CD8-positive, alpha-beta T cell (primary cell): ENCODE measurements at regions of chr5 and their contacts with region 1.

Region 1: DNA sequence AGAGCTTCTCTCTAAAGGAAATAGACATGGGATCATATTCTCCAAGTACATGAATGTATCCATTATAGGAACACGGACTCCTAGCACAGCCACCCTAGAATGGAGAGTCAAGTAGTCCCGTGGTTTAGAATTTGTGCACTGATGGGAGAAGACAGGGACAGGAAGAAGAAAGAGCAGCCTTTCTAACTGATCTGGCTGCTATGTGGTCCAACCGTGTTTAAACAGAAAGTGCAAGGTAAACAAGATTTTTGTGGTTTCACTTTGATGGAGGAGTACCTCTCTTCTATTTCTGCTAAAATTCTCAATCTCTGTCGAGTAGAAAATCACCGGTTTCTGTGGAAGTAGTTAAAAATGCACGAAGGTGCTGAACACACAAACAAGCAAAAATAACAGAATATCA is 171.3 kb downstream of the ST8SIA4 start:
- DNase-seq: peak in 5 of 9 experiments; percentile 2 to 69 (median 18)
- ATAC-seq: peak; percentile 92
- H3K4me3 ChIP-seq: peak overlapping the region; percentile 8 to 34
- H3K4me3 Mint-ChIP-seq: peak overlapping the region; percentile 75
- H3K27ac ChIP-seq: peak overlapping the region in 1 of 2 experiments; percentile 43
- H3K27ac Mint-ChIP-seq: peak overlapping the region; percentile 55
- H3K4me1 ChIP-seq: no peaks in the 10 kb centered on the region
- H3K4me1 Mint-ChIP-seq: peaks cover 12% of the 10 kb centered on the region
- H3K27me3 ChIP-seq: no peaks in the 10 kb centered on the region
- H3K27me3 Mint-ChIP-seq: no peaks in the 10 kb centered on the region
- CTCF ChIP-seq: no peak

Region 2: DNA sequence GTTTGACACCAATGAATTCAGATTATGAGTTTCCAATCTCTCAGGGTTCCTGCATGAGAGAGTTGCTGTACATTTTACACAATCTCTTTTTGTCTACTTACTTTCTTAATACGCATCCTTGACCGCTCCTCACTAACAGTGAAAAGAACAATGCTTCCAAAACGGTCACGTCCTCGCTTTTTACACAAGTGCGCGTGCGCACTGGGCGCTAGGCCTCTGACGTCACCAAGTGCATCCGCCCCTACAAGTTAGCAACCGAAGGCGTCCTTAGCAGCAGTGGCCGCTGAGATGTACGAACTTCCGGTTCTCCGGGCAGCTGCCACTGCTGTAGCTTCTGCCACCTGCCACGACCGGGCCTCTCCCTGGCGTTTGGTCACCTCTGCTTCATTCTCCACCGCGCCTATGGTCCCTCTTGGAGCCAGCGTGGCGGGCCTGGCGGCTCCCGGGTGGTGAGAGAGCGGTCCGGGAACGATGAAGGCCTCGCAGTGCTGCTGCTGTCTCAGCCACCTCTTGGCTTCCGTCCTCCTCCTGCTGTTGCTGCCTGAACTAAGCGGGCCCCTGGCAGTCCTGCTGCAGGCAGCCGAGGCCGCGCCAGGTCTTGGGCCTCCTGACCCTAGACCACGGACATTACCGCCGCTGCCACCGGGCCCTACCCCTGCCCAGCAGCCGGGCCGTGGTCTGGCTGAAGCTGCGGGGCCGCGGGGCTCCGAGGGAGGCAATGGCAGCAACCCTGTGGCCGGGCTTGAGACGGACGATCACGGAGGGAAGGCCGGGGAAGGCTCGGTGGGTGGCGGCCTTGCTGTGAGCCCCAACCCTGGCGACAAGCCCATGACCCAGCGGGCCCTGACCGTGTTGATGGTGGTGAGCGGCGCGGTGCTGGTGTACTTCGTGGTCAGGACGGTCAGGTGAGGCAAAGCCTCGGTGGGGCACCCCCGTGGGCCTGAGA is 196.4 kb before region 1 on chr5 and contains the start of gene FAM174A:
- CTCF ChIA-PET with region 1: no interaction called
- POLR2A ChIA-PET with region 1: no interaction called
- intact Hi-C with region 1: loop called in 1 of 2 experiments (anchors 5 kb)
- DNase-seq: peak; percentile 88 to 98 (median 94)
- ATAC-seq: peak; percentile 86
- H3K4me3 ChIP-seq: peak within 1 kb of the TSS; percentile 92 to 93
- H3K4me3 Mint-ChIP-seq: peak within 1 kb of the TSS; percentile 88
- H3K27ac ChIP-seq: peak within 1 kb of the TSS; percentile 90 to 93
- H3K27ac Mint-ChIP-seq: peak within 1 kb of the TSS; percentile 96
- H3K4me1 ChIP-seq: peaks cover 16% of the 10 kb centered on the region
- H3K4me1 Mint-ChIP-seq: peaks cover 39% of the 10 kb centered on the region
- H3K27me3 ChIP-seq: no peaks in the 10 kb centered on the region
- H3K27me3 Mint-ChIP-seq: no peaks in the 10 kb centered on the region
- CTCF ChIP-seq: no peak
- total RNA-seq, gene FAM174A: 4.9 to 6.5 TPM

Region 3: DNA sequence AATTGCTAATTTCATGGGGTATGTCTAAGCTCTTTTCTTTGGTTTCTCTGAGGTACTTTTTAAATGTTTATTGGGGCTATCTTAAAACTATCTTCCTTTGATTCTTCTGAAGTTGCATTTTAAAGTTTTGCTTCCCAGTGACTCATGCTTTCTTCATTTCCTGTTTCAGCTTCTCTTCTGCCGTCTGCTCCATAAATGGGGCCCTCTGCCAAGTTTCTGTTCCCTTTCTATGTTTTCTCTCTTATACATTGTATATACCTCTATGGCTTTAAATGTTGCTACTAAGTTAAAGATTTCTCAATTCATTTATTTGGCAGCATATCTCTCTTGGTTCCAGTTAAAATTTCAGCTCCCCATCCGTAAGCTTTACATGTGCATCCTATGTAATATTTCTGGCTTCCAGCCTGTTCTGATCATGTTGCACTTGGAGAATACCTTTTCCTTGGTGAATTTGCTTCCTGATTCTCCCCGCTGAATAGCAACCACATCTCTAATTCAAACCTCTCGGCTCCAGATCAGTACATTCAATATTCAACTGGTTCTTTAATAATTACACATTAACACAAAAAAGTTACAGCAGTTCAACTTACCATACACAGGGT is 46.0 kb after region 1 on chr5:
- CTCF ChIA-PET with region 1: no interaction called
- POLR2A ChIA-PET with region 1: no interaction called
- intact Hi-C with region 1: loop called in 1 of 2 experiments (anchors 5 kb)
- DNase-seq: peak in 2 of 9 experiments; percentile 17 to 47
- ATAC-seq: peak; percentile 31
- H3K4me3 ChIP-seq: no peak overlapping the region
- H3K4me3 Mint-ChIP-seq: no peak overlapping the region
- H3K27ac ChIP-seq: no peak overlapping the region
- H3K27ac Mint-ChIP-seq: no peak overlapping the region
- H3K4me1 ChIP-seq: peaks cover 18% of the 10 kb centered on the region
- H3K4me1 Mint-ChIP-seq: peaks cover 27% of the 10 kb centered on the region
- H3K27me3 ChIP-seq: no peaks in the 10 kb centered on the region
- H3K27me3 Mint-ChIP-seq: no peaks in the 10 kb centered on the region
- CTCF ChIP-seq: no peak